Caco-2 (cell line): ENCODE measurements at regions of chr13 and their contacts with region 1.

Region 1: GRCh38 chr13:20495082-20496023 is 30.3 kb downstream of the CRYL1 start:
- DNase-seq: peak; percentile 53 to 68
- H3K4me3 ChIP-seq: no peak overlapping the region
- H3K4me3 Mint-ChIP-seq: no peak overlapping the region
- H3K27ac Mint-ChIP-seq: no peak overlapping the region
- H3K4me1 ChIP-seq: no peaks in the 10 kb centered on the region
- H3K4me1 Mint-ChIP-seq: no peaks in the 10 kb centered on the region
- H3K27me3 ChIP-seq: no peaks in the 10 kb centered on the region
- H3K27me3 Mint-ChIP-seq: no peaks in the 10 kb centered on the region
- CTCF ChIP-seq: peak; percentile 90 to 97

Region 2: DNA sequence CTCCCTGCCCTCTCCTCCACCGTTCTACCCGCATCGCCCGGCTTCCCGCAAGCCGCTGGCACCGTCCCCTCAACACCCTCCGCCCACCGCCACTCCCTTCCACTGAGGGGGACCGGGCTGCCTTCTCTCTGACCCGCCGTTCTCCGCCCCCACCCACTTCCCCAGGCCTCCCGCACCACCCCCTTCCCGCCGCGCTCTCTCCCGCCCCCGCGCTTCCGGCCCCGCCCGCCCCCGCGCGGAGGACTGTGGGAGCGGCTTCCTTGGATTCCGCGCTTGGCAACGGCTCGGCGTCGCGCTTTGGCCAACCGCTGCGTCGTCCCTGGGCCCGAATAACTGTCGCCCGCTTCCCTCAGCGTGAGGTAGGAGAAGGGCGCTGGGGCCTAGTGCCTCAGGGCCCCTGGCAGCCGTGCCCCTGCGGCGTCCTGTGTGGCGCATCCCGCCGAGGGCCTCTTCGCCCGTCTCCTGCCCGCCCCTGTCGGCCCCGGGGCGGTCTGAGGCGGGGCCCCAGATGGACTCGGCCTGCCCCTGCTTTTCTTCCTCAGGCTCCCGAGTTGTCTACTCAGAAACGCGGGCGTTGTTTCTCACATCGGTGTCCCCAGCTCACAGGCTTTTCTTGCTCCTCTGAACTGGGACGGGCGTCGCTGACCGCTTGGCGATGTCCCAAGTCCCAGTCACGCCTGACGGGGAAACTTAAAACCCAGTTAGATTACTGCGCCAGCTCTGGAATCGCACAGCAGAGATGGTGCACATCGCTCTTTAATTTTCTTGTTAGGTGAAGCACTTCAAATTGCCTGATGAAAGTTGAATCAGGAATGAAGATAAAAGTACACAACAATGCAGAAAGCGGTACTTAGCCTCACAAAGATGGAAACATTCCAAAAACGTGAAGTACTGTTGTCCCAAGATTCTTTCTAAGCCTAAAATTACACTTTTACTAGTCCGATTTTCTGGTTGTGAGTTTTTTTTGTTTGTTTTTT is 71.8 kb after region 1 on chr13 and contains the start of gene IFT88:
- CTCF ChIA-PET with region 1: no interaction called
- POLR2A ChIA-PET with region 1: no interaction called
- intact Hi-C with region 1: loop called (anchors 5 kb)
- DNase-seq: peak; percentile 92 to 95
- H3K4me3 ChIP-seq: peak within 1 kb of the TSS; percentile 79
- H3K4me3 Mint-ChIP-seq: peak within 1 kb of the TSS; percentile 98
- H3K27ac Mint-ChIP-seq: peak within 1 kb of the TSS; percentile 91
- H3K4me1 ChIP-seq: no peaks in the 10 kb centered on the region
- H3K4me1 Mint-ChIP-seq: no peaks in the 10 kb centered on the region
- H3K27me3 ChIP-seq: no peaks in the 10 kb centered on the region
- H3K27me3 Mint-ChIP-seq: no peaks in the 10 kb centered on the region
- CTCF ChIP-seq: no peak
- total RNA-seq, gene IFT88: 12.1 and 12.4 TPM in 2 replicates

Region 3: DNA sequence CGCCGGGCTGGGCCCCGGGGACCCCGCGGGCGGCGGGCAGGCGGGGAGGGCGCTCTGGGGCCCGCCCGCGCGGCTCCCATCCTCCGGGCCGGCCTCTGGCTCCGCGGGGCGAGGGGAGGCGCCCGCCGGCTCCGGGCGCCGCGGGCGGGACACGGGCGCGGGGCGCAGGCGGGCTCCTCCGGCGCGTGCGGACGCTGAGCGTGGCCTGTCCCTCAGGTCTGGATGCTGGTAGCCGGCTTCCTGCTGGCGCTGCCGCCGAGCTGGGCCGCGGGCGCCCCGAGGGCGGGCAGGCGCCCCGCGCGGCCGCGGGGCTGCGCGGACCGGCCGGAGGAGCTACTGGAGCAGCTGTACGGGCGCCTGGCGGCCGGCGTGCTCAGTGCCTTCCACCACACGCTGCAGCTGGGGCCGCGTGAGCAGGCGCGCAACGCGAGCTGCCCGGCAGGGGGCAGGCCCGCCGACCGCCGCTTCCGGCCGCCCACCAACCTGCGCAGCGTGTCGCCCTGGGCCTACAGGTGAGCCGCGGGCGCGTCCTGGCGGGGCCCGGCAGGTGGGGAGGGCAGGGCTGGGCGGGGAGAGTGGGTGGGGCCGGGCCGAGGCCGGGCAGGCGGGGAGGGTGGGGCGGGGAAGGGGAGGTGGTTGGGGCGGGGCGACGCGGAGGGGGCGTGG is 208.6 kb after region 1 on chr13:
- CTCF ChIA-PET with region 1: interaction called, 5 read pairs
- POLR2A ChIA-PET with region 1: no interaction called
- intact Hi-C with region 1: loop called (anchors 2 kb)
- DNase-seq: peak; percentile 94 to 97
- H3K4me3 ChIP-seq: peak overlapping the region; percentile 92
- H3K4me3 Mint-ChIP-seq: peak overlapping the region; percentile 92
- H3K27ac Mint-ChIP-seq: no peak overlapping the region
- H3K4me1 ChIP-seq: peaks cover 15% of the 10 kb centered on the region
- H3K4me1 Mint-ChIP-seq: peaks cover 10% of the 10 kb centered on the region
- H3K27me3 ChIP-seq: no peaks in the 10 kb centered on the region
- H3K27me3 Mint-ChIP-seq: no peaks in the 10 kb centered on the region
- CTCF ChIP-seq: peak; percentile 56 to 74

Region 4: DNA sequence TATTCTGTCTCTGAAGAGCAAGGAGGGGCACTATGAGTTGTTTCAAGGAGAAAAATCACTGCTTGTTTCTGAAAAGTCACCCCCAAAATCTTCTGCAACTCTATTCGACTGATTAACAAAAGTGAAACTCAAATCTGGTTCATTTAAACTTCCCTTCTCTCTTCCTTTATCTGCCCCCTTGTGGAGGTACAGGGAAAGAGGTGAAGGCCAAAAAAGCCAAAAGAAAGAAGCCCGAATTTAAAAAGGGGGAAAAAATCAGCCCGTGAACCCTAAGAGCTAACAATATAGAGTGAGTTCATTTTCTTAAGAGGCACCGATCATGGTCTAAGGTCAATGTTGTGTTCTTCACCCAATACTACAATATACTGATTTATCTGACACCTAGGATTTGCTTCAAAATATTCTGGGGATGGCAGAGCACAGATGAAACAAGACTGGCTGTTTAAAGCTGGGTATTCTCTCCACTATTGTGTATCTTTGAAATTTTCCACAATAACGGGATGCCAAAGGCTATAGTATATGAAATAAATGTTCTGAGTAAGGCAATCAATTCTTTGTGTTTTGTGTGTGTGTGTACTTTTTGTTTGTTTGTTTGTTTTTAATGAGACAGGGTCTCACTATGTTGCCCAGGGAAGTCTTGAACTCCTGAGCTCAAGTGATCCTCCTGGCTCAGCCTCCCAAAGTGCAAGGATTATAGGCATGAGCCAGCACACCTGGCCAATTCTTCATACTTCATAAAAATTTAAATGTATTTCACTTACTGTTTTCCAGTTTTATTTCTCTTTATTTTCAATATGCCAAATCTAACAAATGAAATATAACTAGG is 333.4 kb after region 1 on chr13:
- CTCF ChIA-PET with region 1: interaction called, 4 read pairs
- POLR2A ChIA-PET with region 1: no interaction called
- intact Hi-C with region 1: loop called (anchors 1 kb)
- DNase-seq: peak in 1 of 2 experiments; percentile 61
- H3K4me3 ChIP-seq: no peak overlapping the region
- H3K4me3 Mint-ChIP-seq: no peak overlapping the region
- H3K27ac Mint-ChIP-seq: no peak overlapping the region
- H3K4me1 ChIP-seq: peaks cover 5% of the 10 kb centered on the region; the same call in 1 of the 2 replicates
- H3K4me1 Mint-ChIP-seq: peaks cover 12% of the 10 kb centered on the region
- H3K27me3 ChIP-seq: no peaks in the 10 kb centered on the region
- H3K27me3 Mint-ChIP-seq: no peaks in the 10 kb centered on the region
- CTCF ChIP-seq: peak; percentile 74 to 83